Activated T-helper 1 cell treated with anti-CD3 and anti-CD28 coated beads, Interleukin-12 subunit alpha, Interleukin-12 subunit beta, Interleukin-2, Interleukin-4 antibody, amounts not matched to agents 30 ng/mL and 10 ng/mL and 1 ng/mL, durations not matched to agents 14 hours and 24 hours and 36 hours (primary cell): ENCODE measurements at regions of chr2 and their contacts with region 1.

Region 1: GRCh38 chr2:230658877-230659652 is 53.6 kb upstream of the CAB39 start:
- DNase-seq: peak; percentile 70
- H3K4me3 Mint-ChIP-seq: peak overlapping the region; percentile 84
- H3K27ac Mint-ChIP-seq: peak overlapping the region; percentile 99
- H3K4me1 Mint-ChIP-seq: peaks cover 91% of the 10 kb centered on the region
- H3K27me3 Mint-ChIP-seq: no peaks in the 10 kb centered on the region

Region 2: GRCh38 chr2:230234845-230235244 is 424.2 kb before region 1 on chr2:
- intact Hi-C with region 1: loop called (anchors 2 kb)
- DNase-seq: no peak
- H3K4me3 Mint-ChIP-seq: peak overlapping the region; percentile 72
- H3K27ac Mint-ChIP-seq: peak overlapping the region; percentile 96
- H3K4me1 Mint-ChIP-seq: peaks cover 60% of the 10 kb centered on the region
- H3K27me3 Mint-ChIP-seq: no peaks in the 10 kb centered on the region

Region 3: DNA sequence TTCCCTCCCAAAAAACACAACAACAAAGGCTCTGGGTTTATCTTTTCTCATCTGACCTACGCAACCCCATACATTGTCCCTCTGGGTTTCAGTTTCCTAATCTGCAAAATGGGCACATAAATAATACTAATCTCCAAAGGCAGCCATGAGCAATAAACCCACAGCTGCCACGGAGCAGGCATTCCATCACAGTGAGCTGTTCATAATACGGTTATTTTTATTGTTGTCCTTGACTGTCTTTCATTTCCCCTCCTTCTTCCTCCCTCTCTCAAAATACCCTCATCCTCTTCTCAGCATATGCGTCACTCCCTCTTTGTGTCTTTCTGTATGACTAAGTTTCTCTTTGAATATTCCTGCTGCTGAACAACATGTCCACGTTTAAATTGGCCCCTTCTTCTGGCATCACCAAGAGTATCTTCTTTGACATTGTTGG is 76.2 kb before region 1 on chr2:
- intact Hi-C with region 1: loop called (anchors 1 kb)
- DNase-seq: no peak
- H3K4me3 Mint-ChIP-seq: peak overlapping the region; percentile 24
- H3K27ac Mint-ChIP-seq: peak overlapping the region; percentile 62
- H3K4me1 Mint-ChIP-seq: peaks cover 27% of the 10 kb centered on the region
- H3K27me3 Mint-ChIP-seq: no peaks in the 10 kb centered on the region

Region 4: DNA sequence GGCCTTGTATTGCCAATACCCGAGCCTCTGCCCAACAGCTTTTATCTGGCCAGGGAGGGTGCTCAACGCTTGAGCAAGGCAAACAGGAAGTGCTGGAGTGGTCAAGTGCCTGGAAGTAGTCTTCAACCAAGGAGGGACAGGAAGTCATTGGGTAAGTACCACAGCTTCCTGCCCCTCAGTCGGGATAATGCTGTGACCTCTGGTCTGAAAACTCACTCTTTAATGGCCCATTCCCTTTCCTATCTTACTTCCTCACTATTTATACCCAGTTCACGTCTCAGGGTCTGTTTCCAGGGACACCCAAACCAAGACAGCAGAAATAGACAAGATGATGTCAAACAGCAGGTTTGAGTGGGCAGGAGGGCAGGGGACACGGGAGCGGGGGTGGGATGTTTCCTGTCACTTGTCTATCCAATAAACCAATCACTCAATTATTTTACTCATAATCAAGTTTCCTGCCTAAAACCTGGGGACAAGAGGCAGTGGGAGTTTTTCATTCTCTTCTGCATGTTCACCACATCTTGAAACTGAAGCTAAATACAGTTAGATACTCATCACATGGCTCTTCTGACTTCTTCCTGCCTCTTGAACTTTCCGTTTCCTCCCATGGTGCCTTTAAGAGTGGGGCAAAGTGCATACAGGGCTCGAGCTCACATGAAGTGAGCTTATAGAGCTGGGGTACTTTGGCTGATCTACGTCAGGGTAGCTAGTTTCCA is 15.3 kb before region 1 on chr2:
- intact Hi-C with region 1: loop called (anchors 1 kb)
- DNase-seq: peak; percentile 51
- H3K4me3 Mint-ChIP-seq: peak overlapping the region; percentile 39
- H3K27ac Mint-ChIP-seq: peak overlapping the region; percentile 97
- H3K4me1 Mint-ChIP-seq: peaks cover 29% of the 10 kb centered on the region
- H3K27me3 Mint-ChIP-seq: no peaks in the 10 kb centered on the region

Region 5: DNA sequence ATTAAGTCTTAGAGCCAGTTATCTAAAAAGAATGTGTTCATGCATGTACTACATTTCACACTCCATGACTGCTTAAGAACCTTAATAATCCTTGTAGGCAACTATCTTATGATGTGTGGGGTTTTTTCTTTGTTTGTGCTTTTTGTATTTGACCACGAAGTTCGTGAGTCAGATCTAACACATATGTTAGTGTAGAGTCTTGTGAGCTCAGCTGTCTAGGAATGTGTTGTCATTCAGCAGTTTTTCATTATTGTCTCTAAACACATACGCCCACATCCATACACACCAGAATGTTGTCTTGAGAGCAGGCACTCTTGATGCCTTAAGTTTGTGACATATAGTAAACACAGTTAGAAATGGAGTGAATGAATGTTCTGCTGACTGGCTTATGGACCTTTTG is 92.0 kb after region 1 on chr2:
- intact Hi-C with region 1: loop called (anchors 1 kb)
- DNase-seq: peak; percentile 12
- H3K4me3 Mint-ChIP-seq: no peak overlapping the region
- H3K27ac Mint-ChIP-seq: peak overlapping the region; percentile 83
- H3K4me1 Mint-ChIP-seq: peaks cover 77% of the 10 kb centered on the region
- H3K27me3 Mint-ChIP-seq: no peaks in the 10 kb centered on the region

Region 6: DNA sequence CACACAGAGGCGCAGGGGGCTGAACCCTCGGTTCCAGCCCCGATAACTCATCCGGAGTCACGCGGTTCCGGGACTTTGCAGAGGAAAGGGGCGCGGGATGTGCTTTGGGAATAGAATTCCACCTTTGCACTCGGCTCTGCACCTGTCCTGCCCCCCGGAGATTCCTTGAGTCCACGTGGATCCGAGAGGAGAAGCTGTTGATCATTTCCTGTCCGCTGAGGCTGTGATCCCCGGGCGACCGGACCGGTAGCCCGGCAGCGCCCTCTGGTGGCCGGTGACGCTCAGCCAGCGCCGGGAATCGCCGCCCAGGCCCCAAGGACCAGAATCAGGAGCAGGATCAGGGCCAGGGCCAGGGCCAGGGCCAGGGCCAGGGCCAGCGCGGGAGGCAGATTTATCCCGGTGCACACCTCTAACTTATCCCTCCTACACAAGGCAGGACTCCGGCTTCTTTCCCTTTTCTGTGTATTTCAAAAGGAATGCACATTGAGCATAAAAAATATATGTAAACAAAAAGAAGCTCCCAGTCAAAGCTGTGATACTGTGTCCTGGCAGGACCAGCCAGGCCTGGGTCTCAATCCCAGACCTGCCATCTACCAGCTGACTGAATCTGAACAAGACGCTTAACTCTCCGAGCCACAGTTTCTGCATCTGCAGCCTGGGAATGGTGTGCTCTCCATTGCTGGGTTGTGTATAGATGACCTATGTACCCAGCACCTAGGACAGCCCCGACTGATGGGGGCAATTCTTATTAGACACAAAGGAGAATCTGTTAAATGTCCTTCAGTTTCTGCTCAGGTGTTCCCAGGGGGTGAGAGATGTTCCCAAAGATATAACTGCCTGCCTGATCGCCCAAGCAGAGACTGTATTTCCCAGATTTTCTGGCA is 328.3 kb after region 1 on chr2:
- intact Hi-C with region 1: loop called (anchors 2 kb)
- DNase-seq: peak; percentile 68
- H3K4me3 Mint-ChIP-seq: peak overlapping the region; percentile 26
- H3K27ac Mint-ChIP-seq: no peak overlapping the region
- H3K4me1 Mint-ChIP-seq: peaks cover 35% of the 10 kb centered on the region
- H3K27me3 Mint-ChIP-seq: peaks cover 39% of the 10 kb centered on the region